Activated T-helper 1 cell treated with anti-CD3 and anti-CD28 coated beads, Interleukin-12 subunit alpha, Interleukin-12 subunit beta, Interleukin-2, Interleukin-4 antibody, amounts not matched to agents 30 ng/mL and 10 ng/mL and 1 ng/mL, durations not matched to agents 14 hours and 24 hours and 36 hours (primary cell): ENCODE measurements at regions of chr15 and their contacts with region 1.

Region 1: DNA sequence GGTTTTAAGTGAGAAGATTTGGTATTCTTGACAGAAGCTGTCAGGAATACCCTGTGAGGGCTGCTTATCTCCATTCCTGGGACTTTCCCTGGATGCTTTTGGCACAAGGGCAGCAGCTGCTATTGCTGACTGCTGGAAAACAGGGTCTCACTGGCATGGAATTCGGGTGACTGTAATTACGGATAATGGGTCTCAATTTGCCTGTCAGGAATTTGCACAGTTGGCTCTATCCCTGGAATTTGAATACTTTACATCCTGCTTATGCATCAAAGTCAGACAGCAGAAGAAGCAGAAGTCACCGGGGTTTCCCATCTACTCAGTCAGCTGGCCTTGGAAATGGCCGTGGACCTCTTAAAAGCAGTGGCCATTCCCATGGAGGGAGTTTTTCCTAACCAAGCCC is 25.9 kb upstream of the AKAP13 start:
- DNase-seq: no peak
- H3K4me3 Mint-ChIP-seq: no peak overlapping the region
- H3K27ac Mint-ChIP-seq: no peak overlapping the region
- H3K4me1 Mint-ChIP-seq: peaks cover 9% of the 10 kb centered on the region
- H3K27me3 Mint-ChIP-seq: no peaks in the 10 kb centered on the region

Region 2: GRCh38 chr15:85044251-85044853 is 310.1 kb before region 1 on chr15:
- intact Hi-C with region 1: no loop called
- DNase-seq: no peak
- H3K4me3 Mint-ChIP-seq: no peak overlapping the region
- H3K27ac Mint-ChIP-seq: no peak overlapping the region
- H3K4me1 Mint-ChIP-seq: peaks cover 12% of the 10 kb centered on the region
- H3K27me3 Mint-ChIP-seq: no peaks in the 10 kb centered on the region

Region 3: GRCh38 chr15:85330901-85331588 is 23.4 kb before region 1 on chr15:
- intact Hi-C with region 1: loop called (anchors 1 kb)
- DNase-seq: peak; percentile 72
- H3K4me3 Mint-ChIP-seq: peak overlapping the region; percentile 88
- H3K27ac Mint-ChIP-seq: peak overlapping the region; percentile 92
- H3K4me1 Mint-ChIP-seq: peaks cover 51% of the 10 kb centered on the region
- H3K27me3 Mint-ChIP-seq: no peaks in the 10 kb centered on the region

Region 4: GRCh38 chr15:85406916-85407803 is 52.7 kb after region 1 on chr15:
- intact Hi-C with region 1: no loop called
- DNase-seq: no peak
- H3K4me3 Mint-ChIP-seq: peak overlapping the region; percentile 32
- H3K27ac Mint-ChIP-seq: peak overlapping the region; percentile 90
- H3K4me1 Mint-ChIP-seq: peaks cover 79% of the 10 kb centered on the region
- H3K27me3 Mint-ChIP-seq: no peaks in the 10 kb centered on the region